ENCODE measurements at regions of chr12 and their contacts with region 1.

Region 1: DNA sequence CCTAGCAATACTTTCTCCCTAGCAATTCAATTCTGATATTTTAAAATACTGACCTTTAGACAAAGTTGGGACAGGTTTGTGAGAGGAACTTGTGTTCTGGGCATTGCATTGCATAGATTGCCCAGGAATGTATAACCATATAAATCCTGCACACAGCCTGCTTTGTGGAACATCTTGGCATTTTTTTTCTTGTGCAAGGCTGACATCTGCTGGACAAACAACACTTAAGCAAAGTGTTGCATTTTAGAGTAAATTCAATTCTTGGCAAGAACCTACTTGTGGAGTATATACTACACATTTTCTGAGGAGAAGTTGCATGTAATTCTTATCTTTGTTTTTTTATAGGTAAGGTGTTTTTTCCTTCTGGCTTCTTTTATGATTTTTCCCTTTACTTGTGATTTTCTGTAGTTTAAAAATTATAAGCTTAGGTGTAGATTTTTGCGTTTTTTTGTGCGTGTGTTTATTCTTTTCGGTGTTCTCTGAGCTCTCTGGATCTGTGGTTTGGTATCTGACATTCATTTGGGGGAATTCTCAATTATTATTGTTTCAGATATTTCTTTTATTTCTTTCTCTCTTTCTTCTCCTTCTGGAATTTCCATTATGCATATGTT is 26.4 kb downstream of the TESPA1 start:
- DNase-seq: peak; percentile 68
- H3K4me3 Mint-ChIP-seq: no peak overlapping the region
- H3K27ac Mint-ChIP-seq: peak overlapping the region; percentile 0
- H3K4me1 Mint-ChIP-seq: peaks cover 68% of the 10 kb centered on the region
- H3K27me3 Mint-ChIP-seq: no peaks in the 10 kb centered on the region

Region 2: GRCh38 chr12:54853995-54854566 is 104.1 kb before region 1 on chr12 and contains the start of gene MUCL1:
- CTCF ChIA-PET with region 1: interaction called, 10 read pairs
- POLR2A ChIA-PET with region 1: no interaction called
- DNase-seq: peak; percentile 81
- H3K4me3 Mint-ChIP-seq: no peak within 1 kb of the TSS
- H3K27ac Mint-ChIP-seq: no peak within 1 kb of the TSS
- H3K4me1 Mint-ChIP-seq: peaks cover 8% of the 10 kb centered on the region
- H3K27me3 Mint-ChIP-seq: peaks cover 2% of the 10 kb centered on the region
- total RNA-seq, gene MUCL1: not detected

Region 3: DNA sequence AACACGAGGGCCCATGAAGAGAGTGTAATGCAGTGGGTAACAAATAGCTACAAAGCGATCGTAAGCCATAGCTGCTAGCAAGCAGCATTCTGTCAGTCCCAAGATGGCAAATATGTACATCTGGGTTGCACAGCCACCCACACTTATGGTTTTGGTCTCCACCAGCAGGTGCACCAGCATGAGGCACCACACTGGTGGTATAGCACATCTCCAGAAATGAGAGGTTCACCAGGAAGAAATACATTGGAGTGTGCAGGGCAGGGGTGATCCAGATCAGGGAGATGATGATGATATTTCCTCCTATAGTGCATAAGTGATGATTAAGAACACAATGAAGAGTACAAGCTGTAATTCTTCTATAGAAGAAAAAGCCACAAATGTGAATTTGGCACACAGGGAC is 236.2 kb after region 1 on chr12:
- CTCF ChIA-PET with region 1: no interaction called
- POLR2A ChIA-PET with region 1: no interaction called
- DNase-seq: no peak
- H3K4me3 Mint-ChIP-seq: no peak overlapping the region
- H3K27ac Mint-ChIP-seq: no peak overlapping the region
- H3K4me1 Mint-ChIP-seq: no peaks in the 10 kb centered on the region
- H3K27me3 Mint-ChIP-seq: peaks cover 28% of the 10 kb centered on the region

Measured in activated CD4-positive, alpha-beta T cell treated with anti-CD3 and anti-CD28 coated beads, Interleukin-2, amount 10 ng/mL, durations not matched to agents 7 days and 5 days (primary cell).